Naive thymus-derived CD4-positive, alpha-beta T cell (primary cell): ENCODE measurements at regions of chr19 and their contacts with region 1.

Region 1: GRCh38 chr19:50357178-50358100 is 8.0 kb downstream of the NAPSA start:
- DNase-seq: peak; percentile 71 to 91 (median 85)
- ATAC-seq: peak; percentile 89
- H3K4me3 ChIP-seq: peak overlapping the region; percentile 78
- H3K4me3 Mint-ChIP-seq: peak overlapping the region; percentile 88 to 95 (median 92)
- H3K27ac ChIP-seq: peak overlapping the region; percentile 90
- H3K27ac Mint-ChIP-seq: peak overlapping the region; percentile 83 to 99 (median 96)
- H3K4me1 ChIP-seq: peaks cover 0 to 16% of the 10 kb centered on the region in 2 donors
- H3K4me1 Mint-ChIP-seq: peaks cover 15 to 48% (median 42%) of the 10 kb centered on the region in 7 donors
- H3K27me3 ChIP-seq: no peaks in the 10 kb centered on the region
- H3K27me3 Mint-ChIP-seq: no peaks in the 10 kb centered on the region

Region 2: DNA sequence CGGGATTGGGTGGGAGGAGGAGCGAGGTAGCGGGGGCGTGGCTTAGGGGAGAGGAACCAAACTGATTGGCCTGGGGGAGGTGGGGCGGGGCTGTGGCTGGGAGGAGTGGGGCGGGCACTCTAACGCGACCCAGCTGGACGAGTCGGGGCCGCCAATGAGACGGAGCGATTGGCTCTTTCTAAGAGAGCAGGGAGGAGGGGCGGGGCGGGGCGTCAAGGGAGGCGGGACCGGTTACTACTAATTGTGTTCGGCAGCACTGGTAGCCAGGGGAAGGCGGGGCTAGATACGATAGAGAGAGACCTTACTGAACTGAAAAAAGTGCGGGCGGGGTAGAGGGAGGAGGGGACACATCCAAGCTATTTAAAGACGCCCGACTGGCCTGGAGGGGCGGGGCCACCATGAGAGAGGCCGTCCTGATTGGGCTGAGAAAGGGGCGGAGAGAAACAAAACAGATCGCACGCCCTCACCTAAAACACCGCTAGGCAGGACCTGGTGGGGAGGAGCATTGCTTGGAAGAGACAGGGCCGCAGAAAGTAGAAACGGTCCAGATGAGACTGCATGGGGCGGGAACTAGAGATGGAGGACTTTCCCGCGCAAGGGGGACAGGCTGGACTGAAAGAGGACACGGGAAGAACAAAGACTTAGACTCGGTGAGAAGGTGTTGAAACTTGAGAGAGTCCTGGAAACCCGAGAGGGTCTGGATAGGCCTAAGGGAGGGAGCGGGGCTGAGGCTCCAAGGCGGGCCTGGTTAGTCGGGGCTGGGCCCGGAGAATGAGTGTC is 28.1 kb before region 1 on chr19 and contains the start of gene KCNC3:
- CTCF ChIA-PET with region 1: interaction called, 6 read pairs
- POLR2A ChIA-PET with region 1: interaction called, 12 read pairs
- intact Hi-C with region 1: loop called (anchors 1 kb)
- DNase-seq: peak in 8 of 9 donors; percentile 69 to 96 (median 86)
- ATAC-seq: peak; percentile 77
- H3K4me3 ChIP-seq: peak within 1 kb of the TSS; percentile 39
- H3K4me3 Mint-ChIP-seq: peak within 1 kb of the TSS; percentile 72 to 97 (median 86)
- H3K27ac ChIP-seq: no peak within 1 kb of the TSS
- H3K27ac Mint-ChIP-seq: peak within 1 kb of the TSS; percentile 55 to 96 (median 87)
- H3K4me1 ChIP-seq: peaks cover 42 to 62% of the 10 kb centered on the region in 2 donors
- H3K4me1 Mint-ChIP-seq: peaks cover 43 to 75% (median 73%) of the 10 kb centered on the region in 7 donors
- H3K27me3 ChIP-seq: peaks cover 15 to 28% of the 10 kb centered on the region in 2 donors
- H3K27me3 Mint-ChIP-seq: peaks cover 20 to 62% (median 41%) of the 10 kb centered on the region in 5 donors
- total RNA-seq, gene KCNC3: 1.9 to 11.1 (median 2.4) TPM

Region 3: DNA sequence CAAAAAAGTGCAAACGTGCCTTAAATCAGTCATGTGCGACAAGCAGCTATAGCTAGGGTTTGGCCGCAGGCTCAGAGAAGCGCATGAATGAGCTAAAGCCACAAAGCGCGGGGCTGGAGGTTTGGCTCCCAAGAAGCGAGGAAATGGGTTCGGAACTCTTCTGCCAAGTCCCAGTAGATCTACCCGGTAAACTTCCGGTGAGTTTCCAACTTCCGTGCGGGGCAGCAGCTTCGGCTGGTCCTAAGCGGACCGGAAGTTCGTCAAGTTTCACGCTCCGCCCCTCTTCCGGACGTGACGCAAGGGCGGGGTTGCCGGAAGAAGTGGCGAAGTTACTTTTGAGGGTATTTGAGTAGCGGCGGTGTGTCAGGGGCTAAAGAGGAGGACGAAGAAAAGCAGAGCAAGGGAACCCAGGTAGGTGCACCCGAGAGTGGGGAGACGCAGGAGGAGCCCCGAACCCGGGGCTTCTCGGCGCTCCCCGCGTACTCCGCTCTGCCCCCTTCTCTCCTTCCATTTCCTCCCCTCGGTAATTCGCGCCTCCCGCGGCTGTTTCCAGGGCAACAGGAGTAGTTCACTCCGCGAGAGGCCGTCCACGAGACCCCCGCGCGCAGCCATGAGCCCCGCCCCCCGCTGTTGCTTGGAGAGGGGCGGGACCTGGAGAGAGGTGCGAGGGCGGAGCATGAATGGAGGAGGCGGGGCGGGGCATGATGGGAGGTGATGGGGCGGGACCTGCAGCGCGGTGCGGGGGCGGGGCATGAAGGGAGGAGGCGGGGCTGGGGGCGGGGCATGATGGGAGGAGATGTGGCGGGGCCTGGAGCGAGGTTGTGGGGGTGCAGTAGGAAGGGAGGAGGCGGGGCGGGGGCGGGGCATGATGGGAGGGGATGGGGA is 19.0 kb after region 1 on chr19 and contains the start of gene NR1H2:
- CTCF ChIA-PET with region 1: interaction called, 4 read pairs
- POLR2A ChIA-PET with region 1: interaction called, 19 read pairs
- intact Hi-C with region 1: loop called (anchors 1 kb)
- DNase-seq: peak; percentile 89 to 97 (median 95)
- ATAC-seq: peak; percentile 94
- H3K4me3 ChIP-seq: peak within 1 kb of the TSS; percentile 99
- H3K4me3 Mint-ChIP-seq: peak within 1 kb of the TSS; percentile 92 to 100 (median 98)
- H3K27ac ChIP-seq: peak within 1 kb of the TSS; percentile 100
- H3K27ac Mint-ChIP-seq: peak within 1 kb of the TSS; percentile 99 to 100 (median 100)
- H3K4me1 ChIP-seq: peaks cover 4 to 10% of the 10 kb centered on the region in 2 donors
- H3K4me1 Mint-ChIP-seq: peaks cover 12 to 37% (median 24%) of the 10 kb centered on the region in 7 donors
- H3K27me3 ChIP-seq: no peaks in the 10 kb centered on the region
- H3K27me3 Mint-ChIP-seq: no peaks in the 10 kb centered on the region
- total RNA-seq, gene NR1H2: 66.6 to 284 (median 114) TPM

Region 4: DNA sequence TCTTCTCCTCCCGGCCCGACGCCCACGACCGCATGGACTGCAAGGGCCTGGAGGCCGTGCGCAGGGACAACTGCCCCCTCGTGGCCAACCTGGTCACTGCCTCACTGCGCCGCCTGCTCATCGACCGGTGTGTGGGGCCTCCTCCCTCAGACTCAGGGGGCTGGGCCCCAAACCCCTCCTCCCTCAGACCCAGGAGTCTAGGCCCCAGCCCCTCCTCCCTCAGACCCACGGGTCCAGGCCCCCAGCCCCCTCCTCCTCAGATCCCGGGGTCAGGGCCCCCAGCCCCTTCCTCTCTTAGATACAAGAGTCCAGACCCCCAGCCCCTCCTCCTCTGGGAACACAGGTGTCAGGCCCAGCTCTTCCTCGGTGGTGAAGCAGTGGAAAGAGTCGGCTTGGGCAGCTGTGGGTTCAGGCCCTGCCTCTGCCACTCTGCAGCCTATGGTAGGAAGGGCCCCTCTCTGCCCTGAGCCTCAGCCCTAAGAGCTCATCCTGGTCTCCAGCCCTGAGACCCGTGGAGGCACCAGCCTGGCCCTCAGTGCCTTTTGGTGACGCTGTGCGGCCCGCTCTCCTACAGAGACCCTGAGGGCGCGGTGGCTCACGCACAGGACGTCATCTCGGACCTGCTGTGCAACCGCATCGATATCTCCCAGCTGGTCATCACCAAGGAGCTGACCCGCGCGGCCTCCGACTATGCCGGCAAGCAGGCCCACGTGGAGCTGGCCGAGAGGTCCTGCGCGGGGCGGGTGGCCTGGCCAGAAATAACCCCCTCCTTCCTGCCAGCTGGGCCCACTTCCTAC is 57.6 kb after region 1 on chr19:
- CTCF ChIA-PET with region 1: interaction called, 4 read pairs
- POLR2A ChIA-PET with region 1: interaction called, 13 read pairs
- intact Hi-C with region 1: loop called (anchors 1 kb)
- DNase-seq: peak; percentile 45 to 79 (median 66)
- ATAC-seq: peak; percentile 85
- H3K4me3 ChIP-seq: no peak overlapping the region
- H3K4me3 Mint-ChIP-seq: no peak overlapping the region
- H3K27ac ChIP-seq: no peak overlapping the region
- H3K27ac Mint-ChIP-seq: no peak overlapping the region
- H3K4me1 ChIP-seq: no peaks in the 10 kb centered on the region
- H3K4me1 Mint-ChIP-seq: peaks cover 8 to 15% (median 9%) of the 10 kb centered on the region in 7 donors
- H3K27me3 ChIP-seq: no peaks in the 10 kb centered on the region
- H3K27me3 Mint-ChIP-seq: peaks cover 8 to 17% (median 11%) of the 10 kb centered on the region in 5 donors

Region 5: GRCh38 chr19:50461066-50461875 is 103.8 kb after region 1 on chr19:
- CTCF ChIA-PET with region 1: interaction called, 13 read pairs
- POLR2A ChIA-PET with region 1: interaction called, 3 read pairs
- intact Hi-C with region 1: loop called in 1 of 2 experiments (anchors 1 kb)
- DNase-seq: peak in 8 of 9 donors; percentile 23 to 68 (median 46)
- ATAC-seq: peak; percentile 87
- H3K4me3 ChIP-seq: no peak overlapping the region
- H3K4me3 Mint-ChIP-seq: no peak overlapping the region
- H3K27ac ChIP-seq: no peak overlapping the region
- H3K27ac Mint-ChIP-seq: peak overlapping the region in 1 of 9 donors; percentile 52
- H3K4me1 ChIP-seq: peaks cover 0 to 5% of the 10 kb centered on the region in 2 donors
- H3K4me1 Mint-ChIP-seq: peaks cover 0 to 14% (median 4%) of the 10 kb centered on the region in 7 donors
- H3K27me3 ChIP-seq: peaks cover 0 to 6% of the 10 kb centered on the region in 2 donors
- H3K27me3 Mint-ChIP-seq: peaks cover 10 to 44% (median 21%) of the 10 kb centered on the region in 5 donors

Region 6: DNA sequence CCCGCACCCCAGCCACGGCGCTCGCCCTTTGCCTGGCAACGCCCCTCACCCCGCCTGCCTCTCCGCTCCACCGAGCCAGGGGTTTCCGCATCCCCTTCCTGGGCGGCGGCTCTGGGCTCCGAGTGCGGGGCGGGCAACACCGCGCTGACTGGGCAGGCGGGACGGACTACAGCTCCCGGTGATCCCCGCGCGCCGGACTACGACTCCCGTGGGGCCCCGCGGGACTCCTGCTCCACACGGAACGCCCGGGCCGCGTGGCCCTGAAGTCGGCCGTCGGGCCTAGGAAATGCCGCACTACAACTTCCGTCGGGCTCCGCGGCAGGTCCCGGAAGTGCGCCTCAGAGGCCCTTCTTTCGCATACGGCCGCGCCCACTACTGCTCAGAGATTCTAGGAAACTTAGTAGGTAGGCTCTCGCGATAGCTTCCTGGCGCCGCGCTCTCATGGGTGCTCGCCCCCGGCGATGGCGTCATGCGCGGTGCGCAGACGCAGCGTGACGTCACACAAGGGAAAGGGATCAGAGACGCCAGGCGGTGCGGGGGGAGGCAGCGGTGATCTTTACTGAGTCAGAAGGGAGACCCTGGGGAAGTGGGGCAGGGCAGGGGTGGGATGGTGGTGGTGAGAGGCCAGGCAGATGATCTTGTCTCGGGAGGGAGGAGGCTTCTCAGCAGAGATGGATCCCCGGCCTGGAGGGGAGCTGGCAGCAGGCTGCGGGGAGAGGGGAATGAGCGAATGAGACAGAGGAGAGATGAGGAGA is 153.8 kb after region 1 on chr19 and contains the start of gene JOSD2:
- CTCF ChIA-PET with region 1: interaction called, 3 read pairs
- POLR2A ChIA-PET with region 1: interaction called, 3 read pairs
- intact Hi-C with region 1: loop called (anchors 1 kb)
- DNase-seq: peak; percentile 89 to 99 (median 96)
- ATAC-seq: peak; percentile 94
- H3K4me3 ChIP-seq: peak within 1 kb of the TSS; percentile 75
- H3K4me3 Mint-ChIP-seq: peak within 1 kb of the TSS; percentile 75 to 97 (median 88)
- H3K27ac ChIP-seq: peak within 1 kb of the TSS; percentile 86
- H3K27ac Mint-ChIP-seq: peak within 1 kb of the TSS; percentile 87 to 99 (median 97)
- H3K4me1 ChIP-seq: peaks cover 7 to 16% of the 10 kb centered on the region in 2 donors
- H3K4me1 Mint-ChIP-seq: peaks cover 0 to 27% (median 19%) of the 10 kb centered on the region in 7 donors
- H3K27me3 ChIP-seq: no peaks in the 10 kb centered on the region
- H3K27me3 Mint-ChIP-seq: peaks cover 0 to 16% (median 6%) of the 10 kb centered on the region in 5 donors
- total RNA-seq, gene JOSD2: 13.0 to 45.9 (median 22.7) TPM

Region 7: GRCh38 chr19:50777754-50778303 is 420.4 kb after region 1 on chr19:
- CTCF ChIA-PET with region 1: interaction called, 7 read pairs
- POLR2A ChIA-PET with region 1: interaction called, 3 read pairs
- intact Hi-C with region 1: loop called (anchors 1 kb)
- DNase-seq: no peak
- ATAC-seq: no peak
- H3K4me3 ChIP-seq: no peak overlapping the region
- H3K4me3 Mint-ChIP-seq: no peak overlapping the region
- H3K27ac ChIP-seq: no peak overlapping the region
- H3K27ac Mint-ChIP-seq: no peak overlapping the region
- H3K4me1 ChIP-seq: no peaks in the 10 kb centered on the region
- H3K4me1 Mint-ChIP-seq: peaks cover 2 to 14% (median 6%) of the 10 kb centered on the region in 7 donors
- H3K27me3 ChIP-seq: peaks cover 0 to 17% of the 10 kb centered on the region in 2 donors
- H3K27me3 Mint-ChIP-seq: peaks cover 55 to 85% (median 79%) of the 10 kb centered on the region in 5 donors